Activated naive CD4-positive, alpha-beta T cell treated with anti-CD3 and anti-CD28 coated beads for 36 hours (primary cell): ENCODE measurements at regions of chr2 and their contacts with region 1.

Region 1: GRCh38 chr2:1550658-1551316 is 137.5 kb downstream of the TPO start:
- DNase-seq: peak; percentile 68
- H3K4me3 Mint-ChIP-seq: no peak overlapping the region
- H3K27ac Mint-ChIP-seq: no peak overlapping the region
- H3K4me1 Mint-ChIP-seq: peaks cover 15% of the 10 kb centered on the region
- H3K27me3 Mint-ChIP-seq: no peaks in the 10 kb centered on the region

Region 2: GRCh38 chr2:529425-529824 is 1021.4 kb before region 1 on chr2:
- CTCF ChIA-PET with region 1: interaction called, 4 read pairs
- intact Hi-C with region 1: loop called (anchors 2 kb)
- DNase-seq: no peak
- H3K4me3 Mint-ChIP-seq: no peak overlapping the region
- H3K27ac Mint-ChIP-seq: no peak overlapping the region
- H3K4me1 Mint-ChIP-seq: no peaks in the 10 kb centered on the region
- H3K27me3 Mint-ChIP-seq: peaks cover 12% of the 10 kb centered on the region

Region 3: GRCh38 chr2:555164-555922 is 995.4 kb before region 1 on chr2:
- CTCF ChIA-PET with region 1: no interaction called
- intact Hi-C with region 1: no loop called
- DNase-seq: no peak
- H3K4me3 Mint-ChIP-seq: no peak overlapping the region
- H3K27ac Mint-ChIP-seq: no peak overlapping the region
- H3K4me1 Mint-ChIP-seq: no peaks in the 10 kb centered on the region
- H3K27me3 Mint-ChIP-seq: peaks cover 15% of the 10 kb centered on the region

Region 4: DNA sequence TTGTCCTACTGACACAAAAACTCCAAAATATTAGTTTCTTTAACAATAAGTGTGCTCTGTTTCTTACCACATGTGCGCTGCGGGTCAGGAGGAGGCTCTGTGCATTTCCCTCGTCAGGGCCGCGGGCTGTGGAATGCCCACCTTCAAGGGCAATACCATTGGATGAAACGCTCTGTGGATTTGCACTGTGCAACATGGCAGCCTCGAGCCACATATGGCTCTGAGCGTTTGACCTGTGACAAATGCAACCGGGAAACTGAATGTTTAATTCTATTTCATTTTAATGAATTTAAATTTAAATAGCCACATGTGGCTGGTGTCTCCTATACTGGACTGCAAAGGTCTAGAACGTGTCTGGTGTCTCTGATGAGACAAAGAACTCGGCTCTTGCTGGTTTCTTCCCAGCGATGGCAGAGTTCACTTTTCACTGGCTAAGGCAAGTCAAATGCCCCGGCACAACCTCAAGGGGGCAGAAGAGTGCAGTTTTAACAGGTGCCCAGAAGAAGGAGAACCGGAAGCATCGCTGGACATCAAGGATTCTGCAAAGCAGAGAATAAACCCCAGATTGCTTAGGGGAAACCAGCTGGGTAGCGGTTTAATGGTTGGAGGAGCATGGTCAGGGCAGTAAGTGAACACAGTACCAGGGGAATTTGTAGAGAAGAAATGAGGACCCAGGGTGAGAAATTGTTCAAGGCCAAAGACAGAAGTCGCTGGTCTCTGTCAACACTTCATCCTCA is 836.6 kb before region 1 on chr2:
- CTCF ChIA-PET with region 1: interaction called, 6 read pairs
- intact Hi-C with region 1: loop called (anchors 1 kb)
- DNase-seq: peak; percentile 58
- H3K4me3 Mint-ChIP-seq: no peak overlapping the region
- H3K27ac Mint-ChIP-seq: no peak overlapping the region
- H3K4me1 Mint-ChIP-seq: no peaks in the 10 kb centered on the region
- H3K27me3 Mint-ChIP-seq: peaks cover 27% of the 10 kb centered on the region

Region 5: DNA sequence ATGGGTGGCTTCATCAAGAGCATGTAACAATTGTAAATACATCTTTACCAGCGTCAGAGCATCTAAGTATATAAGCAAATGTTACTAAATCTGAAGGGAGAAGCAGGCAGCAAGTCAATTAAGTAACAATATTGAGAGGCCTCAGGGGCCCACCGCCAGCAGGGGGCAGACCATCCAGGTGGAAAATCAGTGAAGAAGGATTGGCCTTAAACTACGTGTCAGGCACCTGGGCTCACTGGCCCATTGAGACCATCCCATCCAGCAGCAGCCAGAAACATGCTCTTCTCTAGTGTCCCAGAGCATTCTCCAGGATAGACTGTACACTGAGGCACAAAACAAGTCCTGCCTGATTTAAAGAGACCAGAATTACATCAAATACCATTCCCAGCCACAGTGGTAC is 696.3 kb before region 1 on chr2:
- CTCF ChIA-PET with region 1: interaction called, 23 read pairs
- intact Hi-C with region 1: loop called (anchors 1 kb)
- DNase-seq: peak; percentile 73
- H3K4me3 Mint-ChIP-seq: no peak overlapping the region
- H3K27ac Mint-ChIP-seq: no peak overlapping the region
- H3K4me1 Mint-ChIP-seq: peaks cover 19% of the 10 kb centered on the region
- H3K27me3 Mint-ChIP-seq: no peaks in the 10 kb centered on the region

Region 6: DNA sequence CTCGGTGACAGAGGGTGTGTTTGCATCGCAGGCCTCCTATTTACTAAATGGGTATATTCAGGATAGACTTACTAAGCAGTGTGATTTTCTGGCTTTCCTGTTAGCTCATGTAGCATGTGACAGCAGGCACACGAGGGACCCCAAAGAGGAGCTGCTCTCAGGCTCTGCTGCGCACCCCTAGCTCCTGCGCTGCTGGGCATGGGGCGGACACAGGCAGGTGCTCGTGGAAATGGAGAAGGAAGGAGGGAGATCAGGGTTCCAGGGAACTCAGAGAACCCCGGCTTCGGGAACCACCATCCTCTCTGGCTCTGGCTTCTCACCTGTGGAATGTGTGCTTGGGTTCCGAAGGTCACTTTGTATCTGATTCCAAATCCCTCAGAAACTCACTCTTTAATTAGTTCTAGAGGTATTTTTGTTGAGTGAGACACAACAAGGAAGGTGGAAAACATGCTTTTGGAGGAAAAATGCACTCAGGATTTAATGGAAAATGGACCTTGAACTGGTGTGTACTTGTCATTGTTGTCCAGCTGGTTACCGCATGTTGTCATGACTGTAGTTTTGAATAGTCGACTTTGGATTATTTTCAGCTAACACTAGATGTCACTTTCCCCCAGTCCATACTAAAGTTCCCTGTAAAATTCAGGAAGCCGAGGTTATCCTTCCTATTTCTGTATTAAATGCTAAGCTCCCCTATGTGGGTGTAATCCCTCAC is 596.7 kb before region 1 on chr2:
- CTCF ChIA-PET with region 1: interaction called, 6 read pairs
- intact Hi-C with region 1: loop called (anchors 1 kb)
- DNase-seq: no peak
- H3K4me3 Mint-ChIP-seq: no peak overlapping the region
- H3K27ac Mint-ChIP-seq: no peak overlapping the region
- H3K4me1 Mint-ChIP-seq: peaks cover 9% of the 10 kb centered on the region
- H3K27me3 Mint-ChIP-seq: peaks cover 28% of the 10 kb centered on the region

Region 7: DNA sequence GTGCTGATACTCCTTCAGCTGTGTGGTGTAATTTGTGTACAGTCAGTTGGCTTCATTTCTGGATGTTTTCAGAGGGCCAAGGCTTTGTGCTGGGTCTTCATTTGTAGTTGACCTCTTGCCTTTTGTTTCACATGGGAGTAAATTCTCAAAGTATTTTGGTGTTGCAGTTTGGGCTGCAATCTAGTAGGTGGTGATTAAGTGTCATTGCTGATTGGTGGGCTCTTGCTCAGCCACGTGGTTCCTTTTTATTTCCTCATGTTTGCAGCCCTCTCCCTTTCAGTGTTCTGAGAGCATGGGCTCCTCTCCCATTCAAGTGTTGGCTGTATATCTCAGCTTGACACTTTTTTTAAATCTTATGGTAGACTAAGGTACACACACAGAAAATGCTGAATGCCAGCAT is 503.3 kb before region 1 on chr2:
- CTCF ChIA-PET with region 1: no interaction called
- intact Hi-C with region 1: loop called (anchors 1 kb)
- DNase-seq: peak; percentile 12
- H3K4me3 Mint-ChIP-seq: no peak overlapping the region
- H3K27ac Mint-ChIP-seq: no peak overlapping the region
- H3K4me1 Mint-ChIP-seq: peaks cover 6% of the 10 kb centered on the region
- H3K27me3 Mint-ChIP-seq: no peaks in the 10 kb centered on the region

Region 8: DNA sequence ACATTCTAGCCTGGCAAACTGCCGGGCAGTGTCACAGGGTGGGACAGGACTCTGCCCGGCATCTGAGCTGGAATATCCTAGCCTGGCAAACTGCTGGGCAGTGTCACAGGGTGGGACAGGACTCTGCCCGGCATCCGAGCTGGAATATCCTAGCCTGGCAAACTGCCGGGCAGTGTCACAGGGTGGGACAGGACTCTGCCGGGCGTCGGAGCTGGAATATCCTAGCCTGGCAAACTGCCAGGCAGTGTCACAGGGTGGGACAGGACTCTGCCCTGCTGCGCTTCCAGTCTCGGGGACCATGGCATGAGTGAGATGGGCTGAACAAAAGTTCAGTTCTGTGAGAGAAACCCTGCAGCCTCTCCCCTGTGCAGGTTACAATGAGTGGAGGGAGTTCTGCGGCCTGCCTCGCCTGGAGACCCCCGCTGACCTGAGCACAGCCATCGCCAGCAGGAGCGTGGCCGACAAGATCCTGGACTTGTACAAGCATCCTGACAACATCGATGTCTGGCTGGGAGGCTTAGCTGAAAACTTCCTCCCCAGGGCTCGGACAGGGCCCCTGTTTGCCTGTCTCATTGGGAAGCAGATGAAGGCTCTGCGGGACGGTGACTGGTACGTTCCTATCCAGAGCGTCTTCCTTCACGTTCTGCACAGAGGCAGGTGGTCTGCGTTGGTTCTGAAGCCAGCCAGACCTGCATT is 57.2 kb before region 1 on chr2:
- CTCF ChIA-PET with region 1: no interaction called
- intact Hi-C with region 1: no loop called
- DNase-seq: no peak
- H3K4me3 Mint-ChIP-seq: no peak overlapping the region
- H3K27ac Mint-ChIP-seq: no peak overlapping the region
- H3K4me1 Mint-ChIP-seq: peaks cover 3% of the 10 kb centered on the region
- H3K27me3 Mint-ChIP-seq: no peaks in the 10 kb centered on the region

Region 9: DNA sequence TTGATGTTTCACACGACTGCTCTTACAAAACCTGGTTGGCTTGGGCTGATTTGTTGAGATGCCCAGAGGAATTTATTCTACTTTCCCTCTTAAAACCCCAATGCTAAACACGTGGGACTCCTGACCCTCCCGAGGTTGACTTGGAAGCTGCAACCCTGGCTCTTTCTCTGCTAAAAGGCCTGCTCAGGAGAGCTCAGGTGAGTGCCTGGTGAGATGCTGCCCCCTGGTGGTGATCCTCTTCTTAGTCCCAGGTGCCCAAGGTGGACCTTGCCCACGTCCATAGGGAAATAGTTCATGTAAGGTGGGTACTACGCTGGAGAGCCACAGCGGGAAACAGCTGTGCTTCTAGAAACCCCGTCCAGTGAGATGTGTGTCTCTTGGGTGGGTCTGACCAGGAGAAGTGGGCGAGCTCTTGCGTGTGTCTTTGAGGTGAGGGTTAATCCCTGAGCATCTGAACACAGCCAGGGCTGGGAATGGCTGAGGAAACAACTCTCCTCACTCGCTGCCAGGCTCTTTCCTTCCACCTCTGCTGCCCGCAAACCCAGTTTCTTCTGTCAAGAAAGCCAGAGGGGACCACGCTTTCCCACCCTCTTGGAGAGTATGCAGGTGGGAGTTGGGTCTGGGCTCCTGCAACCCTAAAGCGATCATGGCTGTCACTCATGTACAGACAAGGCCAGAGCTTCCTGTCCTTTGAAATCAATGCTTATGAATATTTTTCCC is 219.1 kb after region 1 on chr2:
- CTCF ChIA-PET with region 1: no interaction called
- intact Hi-C with region 1: loop called (anchors 2 kb)
- DNase-seq: peak; percentile 73
- H3K4me3 Mint-ChIP-seq: no peak overlapping the region
- H3K27ac Mint-ChIP-seq: no peak overlapping the region
- H3K4me1 Mint-ChIP-seq: no peaks in the 10 kb centered on the region
- H3K27me3 Mint-ChIP-seq: peaks cover 2% of the 10 kb centered on the region

Region 10: GRCh38 chr2:1781271-1782080 is 230.7 kb after region 1 on chr2:
- CTCF ChIA-PET with region 1: no interaction called
- intact Hi-C with region 1: no loop called
- DNase-seq: no peak
- H3K4me3 Mint-ChIP-seq: no peak overlapping the region
- H3K27ac Mint-ChIP-seq: no peak overlapping the region
- H3K4me1 Mint-ChIP-seq: no peaks in the 10 kb centered on the region
- H3K27me3 Mint-ChIP-seq: peaks cover 18% of the 10 kb centered on the region

Region 11: DNA sequence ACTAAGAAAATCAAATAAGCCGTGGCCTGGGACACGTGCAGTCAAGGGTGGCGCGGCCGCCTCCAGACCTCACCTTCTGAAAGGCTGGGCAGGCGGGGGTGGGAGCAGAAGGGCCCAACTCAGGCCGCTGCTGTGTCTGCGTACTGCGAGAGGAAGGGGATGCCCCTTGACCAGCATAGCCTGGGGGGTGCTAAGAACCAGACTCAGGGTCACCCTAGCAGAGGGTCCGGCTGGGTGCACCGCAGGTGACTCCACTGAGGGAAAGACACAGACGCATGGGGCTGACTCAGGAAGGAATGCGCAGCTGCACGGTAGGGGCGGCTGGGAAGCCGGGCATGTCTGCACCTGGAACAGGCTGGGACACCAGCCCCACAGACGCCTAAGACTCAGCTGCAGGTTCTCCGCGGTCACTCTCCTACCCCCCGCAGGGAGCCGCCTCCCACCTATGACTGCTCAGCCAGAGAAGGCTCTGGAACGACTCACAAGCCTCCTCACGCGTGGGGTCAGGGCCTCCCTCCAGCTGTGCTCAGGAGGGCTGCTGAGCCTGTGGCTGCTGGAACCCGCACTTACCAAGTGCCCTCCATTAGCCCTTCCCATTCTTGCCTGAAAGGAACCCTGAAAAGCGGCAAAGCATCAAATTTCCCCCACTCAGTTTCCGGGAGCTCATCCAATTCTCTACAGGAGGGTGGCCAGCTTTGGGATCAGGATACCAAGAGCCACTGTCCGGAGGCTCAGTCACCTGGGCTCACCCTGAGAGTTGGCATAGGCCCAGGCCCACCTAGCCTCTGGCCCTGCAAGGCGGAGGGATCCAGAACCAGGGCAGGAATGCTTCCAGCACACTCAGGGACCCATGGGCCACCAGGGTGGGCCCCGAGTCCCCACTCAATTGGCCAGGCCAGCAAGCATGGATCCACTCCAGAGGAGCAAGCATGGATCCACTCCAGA is 1212.9 kb after region 1 on chr2:
- CTCF ChIA-PET with region 1: no interaction called
- intact Hi-C with region 1: no loop called
- DNase-seq: no peak
- H3K4me3 Mint-ChIP-seq: no peak overlapping the region
- H3K27ac Mint-ChIP-seq: no peak overlapping the region
- H3K4me1 Mint-ChIP-seq: no peaks in the 10 kb centered on the region
- H3K27me3 Mint-ChIP-seq: no peaks in the 10 kb centered on the region